T-cell (primary cell): ENCODE measurements at regions of chr5 and their contacts with region 1.

Region 1: GRCh38 chr5:124732428-124733328 is 13.8 kb downstream of the ZNF608 start:
- DNase-seq: no peak
- ATAC-seq: no peak
- H3K4me3 ChIP-seq: no peak overlapping the region
- H3K4me3 Mint-ChIP-seq: no peak overlapping the region
- H3K27ac ChIP-seq: no peak overlapping the region
- H3K27ac Mint-ChIP-seq: no peak overlapping the region
- H3K4me1 ChIP-seq: no peaks in the 10 kb centered on the region
- H3K4me1 Mint-ChIP-seq: no peaks in the 10 kb centered on the region
- H3K27me3 ChIP-seq: no peaks in the 10 kb centered on the region
- H3K27me3 Mint-ChIP-seq: peaks cover 14 to 30% of the 10 kb centered on the region in 2 donors

Region 2: GRCh38 chr5:124686239-124687004 is 46.3 kb before region 1 on chr5:
- CTCF ChIA-PET with region 1: no interaction called
- POLR2A ChIA-PET with region 1: interaction called in 1 of 2 experiments, 14 read pairs
- DNase-seq: no peak
- ATAC-seq: no peak
- H3K4me3 ChIP-seq: no peak overlapping the region
- H3K4me3 Mint-ChIP-seq: no peak overlapping the region
- H3K27ac ChIP-seq: no peak overlapping the region
- H3K27ac Mint-ChIP-seq: no peak overlapping the region
- H3K4me1 ChIP-seq: no peaks in the 10 kb centered on the region
- H3K4me1 Mint-ChIP-seq: no peaks in the 10 kb centered on the region
- H3K27me3 ChIP-seq: no peaks in the 10 kb centered on the region
- H3K27me3 Mint-ChIP-seq: peaks cover 4 to 8% of the 10 kb centered on the region in 2 donors